ENCODE measurements at regions of chr7 and their contacts with region 1.

Region 1: GRCh38 chr7:47170516-47170915 is 411.4 kb downstream of the TNS3 start:
- DNase-seq: no peak
- ATAC-seq: no peak
- H3K4me3 ChIP-seq: no peak overlapping the region
- H3K27ac ChIP-seq: no peak overlapping the region
- H3K4me1 ChIP-seq: peaks cover 44% of the 10 kb centered on the region
- H3K27me3 ChIP-seq: no peaks in the 10 kb centered on the region
- CTCF ChIP-seq: no peak
- EP300 ChIP-seq: no peak
- POLR2A ChIP-seq: no peak
- RAD21 ChIP-seq: no peak

Region 2: DNA sequence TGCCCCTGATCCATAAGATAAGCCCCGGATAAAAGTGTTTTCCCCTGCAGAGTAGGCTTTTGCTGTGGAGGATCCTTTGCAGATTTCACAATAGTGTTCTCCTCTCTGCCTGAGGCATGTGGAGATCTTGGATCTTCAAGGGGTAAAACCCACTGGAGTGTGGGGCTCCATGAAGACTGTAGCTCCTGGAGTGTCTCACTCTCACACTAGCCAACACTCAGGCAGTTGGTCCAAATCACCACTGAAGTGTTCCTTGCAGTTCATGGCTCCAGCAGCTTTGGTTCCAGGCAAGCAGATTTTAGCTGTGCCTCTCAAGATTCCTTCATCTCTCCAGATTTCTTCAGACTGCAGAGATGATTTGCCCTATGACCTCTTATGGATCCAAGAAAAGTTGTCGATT is 253.9 kb before region 1 on chr7:
- CTCF ChIA-PET with region 1: no interaction called
- POLR2A ChIA-PET with region 1: no interaction called
- in situ Hi-C with region 1: no loop called
- intact Hi-C with region 1: no loop called
- DNase-seq: no peak
- ATAC-seq: no peak
- H3K4me3 ChIP-seq: no peak overlapping the region
- H3K27ac ChIP-seq: no peak overlapping the region
- H3K4me1 ChIP-seq: no peaks in the 10 kb centered on the region
- H3K27me3 ChIP-seq: no peaks in the 10 kb centered on the region
- CTCF ChIP-seq: no peak
- EP300 ChIP-seq: no peak
- POLR2A ChIP-seq: no peak
- RAD21 ChIP-seq: no peak

Region 3: GRCh38 chr7:47100817-47101435 is 69.6 kb before region 1 on chr7:
- CTCF ChIA-PET with region 1: no interaction called
- POLR2A ChIA-PET with region 1: no interaction called
- in situ Hi-C with region 1: no loop called
- intact Hi-C with region 1: loop called (anchors 1 kb)
- DNase-seq: peak; percentile 57
- ATAC-seq: peak; percentile 98
- H3K4me3 ChIP-seq: no peak overlapping the region
- H3K27ac ChIP-seq: no peak overlapping the region
- H3K4me1 ChIP-seq: peaks cover 6% of the 10 kb centered on the region; the same call in 1 of the 2 replicates
- H3K27me3 ChIP-seq: no peaks in the 10 kb centered on the region; a peak in 1 of 5 replicates
- CTCF ChIP-seq: peak; percentile 77
- EP300 ChIP-seq: no peak
- POLR2A ChIP-seq: no peak
- RAD21 ChIP-seq: no peak

Region 4: GRCh38 chr7:47147213-47147631 is 23.3 kb before region 1 on chr7:
- CTCF ChIA-PET with region 1: no interaction called
- POLR2A ChIA-PET with region 1: no interaction called
- in situ Hi-C with region 1: no loop called
- intact Hi-C with region 1: loop called (anchors 1 kb)
- DNase-seq: peak; percentile 86
- ATAC-seq: peak; percentile 96
- H3K4me3 ChIP-seq: no peak overlapping the region
- H3K27ac ChIP-seq: no peak overlapping the region
- H3K4me1 ChIP-seq: peaks cover 33% of the 10 kb centered on the region
- H3K27me3 ChIP-seq: no peaks in the 10 kb centered on the region
- CTCF ChIP-seq: no peak
- EP300 ChIP-seq: peak in 1 of 2 experiments; percentile 77; a peak in 2 of 4 replicates
- POLR2A ChIP-seq: no peak
- RAD21 ChIP-seq: no peak

Measured in HepG2 (cell line).